Thyroid gland (tissue), 4 donors: ENCODE measurements at regions of chr17 and their contacts with region 1.

Region 1: DNA sequence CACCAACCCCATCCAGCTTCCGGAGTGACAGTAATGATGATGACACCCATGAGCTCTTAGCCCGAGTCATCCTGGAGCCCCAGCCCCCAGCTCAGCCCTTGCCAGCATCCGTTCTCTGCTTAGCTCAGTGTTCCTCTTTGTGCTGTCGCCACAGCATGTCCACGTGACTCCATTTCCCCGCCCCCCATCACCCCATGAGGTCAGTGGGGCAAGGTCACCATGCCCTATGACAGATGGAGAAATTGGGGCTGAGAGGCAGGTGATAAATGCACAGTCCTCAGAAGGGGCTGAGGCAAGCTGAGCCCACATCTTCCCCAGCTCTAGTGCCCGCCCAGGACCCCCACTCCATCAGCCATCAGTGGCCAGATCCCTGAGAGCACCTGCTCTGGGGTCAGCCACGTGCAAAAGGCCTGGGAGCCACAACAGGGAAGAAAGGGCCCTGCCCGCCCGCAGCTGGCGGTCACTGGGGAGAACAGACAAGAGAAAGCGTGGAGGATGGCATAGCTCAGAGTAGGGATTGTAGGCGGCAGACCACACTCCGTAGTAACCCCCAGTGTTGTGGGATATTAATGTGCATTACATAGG is 17.1 kb downstream of the ITGB4 start:
- DNase-seq: no peak
- H3K4me3 ChIP-seq: no peak overlapping the region
- H3K27ac ChIP-seq: no peak overlapping the region
- H3K4me1 ChIP-seq: no peaks in the 10 kb centered on the region
- H3K27me3 ChIP-seq: no peaks in the 10 kb centered on the region
- CTCF ChIP-seq: no peak
- POLR2A ChIP-seq: no peak

Region 2: GRCh38 chr17:75619506-75620431 is 118.5 kb before region 1 on chr17:
- intact Hi-C with region 1: loop called (anchors 5 kb)
- DNase-seq: no peak
- H3K4me3 ChIP-seq: no peak overlapping the region
- H3K27ac ChIP-seq: no peak overlapping the region
- H3K4me1 ChIP-seq: no peaks in the 10 kb centered on the region
- H3K27me3 ChIP-seq: no peaks in the 10 kb centered on the region
- CTCF ChIP-seq: peak in 2 of 6 experiments; percentile 25 to 26
- POLR2A ChIP-seq: no peak

Region 3: GRCh38 chr17:75779231-75779986 is 41.1 kb after region 1 on chr17:
- intact Hi-C with region 1: no loop called
- DNase-seq: peak; percentile 97 to 98
- H3K4me3 ChIP-seq: peak overlapping the region; percentile 63 to 96 (median 91)
- H3K27ac ChIP-seq: peak overlapping the region; percentile 94 to 99 (median 97)
- H3K4me1 ChIP-seq: peaks cover 33 to 41% of the 10 kb centered on the region in 2 donors
- H3K27me3 ChIP-seq: no peaks in the 10 kb centered on the region
- CTCF ChIP-seq: peak in 1 of 6 experiments; percentile 18
- POLR2A ChIP-seq: peak; percentile 100

Region 4: GRCh38 chr17:76032073-76032779 is 293.9 kb after region 1 on chr17:
- intact Hi-C with region 1: no loop called
- DNase-seq: no peak
- H3K4me3 ChIP-seq: no peak overlapping the region
- H3K27ac ChIP-seq: no peak overlapping the region
- H3K4me1 ChIP-seq: peaks cover 5 to 6% of the 10 kb centered on the region in 2 donors
- H3K27me3 ChIP-seq: no peaks in the 10 kb centered on the region
- CTCF ChIP-seq: no peak
- POLR2A ChIP-seq: no peak